Left cardiac atrium (tissue), 4 donors: ENCODE measurements at regions of chr10 and their contacts with region 1.

Region 1: GRCh38 chr10:91864099-91864498 is 45.2 kb downstream of the FGFBP3 start:
- DNase-seq: no peak
- ATAC-seq: no peak

Region 2: GRCh38 chr10:91829268-91829667 is 34.8 kb before region 1 on chr10:
- intact Hi-C with region 1: loop called in 1 of 2 experiments (anchors 5 kb)
- DNase-seq: no peak
- ATAC-seq: no peak

Region 3: GRCh38 chr10:92010047-92010735 is 146.1 kb after region 1 on chr10:
- intact Hi-C with region 1: no loop called
- DNase-seq: no peak
- ATAC-seq: no peak

Region 4: DNA sequence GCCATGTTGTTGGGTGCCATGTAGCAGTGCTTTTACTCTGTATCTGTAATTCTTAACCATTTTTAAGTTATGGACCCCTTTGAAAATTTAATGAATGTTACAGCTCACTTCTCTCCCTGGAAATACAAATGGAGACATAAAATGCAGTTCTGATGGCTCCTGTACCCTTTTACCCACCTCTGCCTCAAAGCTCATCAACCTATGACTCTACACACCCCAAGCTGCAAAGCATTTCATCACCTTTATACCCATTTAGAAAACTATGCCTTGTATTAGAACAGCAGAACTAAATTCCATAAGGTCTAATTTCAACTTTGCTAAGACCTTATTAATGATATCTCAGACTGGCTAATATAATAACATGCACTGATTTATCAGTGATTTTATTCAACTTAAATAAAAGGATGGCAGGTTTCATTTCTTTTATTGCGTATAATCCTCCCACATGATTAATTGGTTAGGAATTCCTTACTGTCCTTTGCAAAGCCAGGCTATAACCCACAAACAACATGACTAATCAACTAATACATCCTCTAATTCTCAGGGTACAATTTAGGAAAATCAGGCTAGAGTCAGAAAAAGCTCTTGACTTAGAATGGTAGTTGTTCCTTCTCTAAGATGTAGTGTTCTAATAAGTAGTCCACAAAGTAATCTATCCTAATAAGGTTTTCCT is 358.6 kb after region 1 on chr10:
- intact Hi-C with region 1: no loop called
- DNase-seq: no peak
- ATAC-seq: no peak